ENCODE measurements at regions of chr14 and their contacts with region 1.

Region 1: DNA sequence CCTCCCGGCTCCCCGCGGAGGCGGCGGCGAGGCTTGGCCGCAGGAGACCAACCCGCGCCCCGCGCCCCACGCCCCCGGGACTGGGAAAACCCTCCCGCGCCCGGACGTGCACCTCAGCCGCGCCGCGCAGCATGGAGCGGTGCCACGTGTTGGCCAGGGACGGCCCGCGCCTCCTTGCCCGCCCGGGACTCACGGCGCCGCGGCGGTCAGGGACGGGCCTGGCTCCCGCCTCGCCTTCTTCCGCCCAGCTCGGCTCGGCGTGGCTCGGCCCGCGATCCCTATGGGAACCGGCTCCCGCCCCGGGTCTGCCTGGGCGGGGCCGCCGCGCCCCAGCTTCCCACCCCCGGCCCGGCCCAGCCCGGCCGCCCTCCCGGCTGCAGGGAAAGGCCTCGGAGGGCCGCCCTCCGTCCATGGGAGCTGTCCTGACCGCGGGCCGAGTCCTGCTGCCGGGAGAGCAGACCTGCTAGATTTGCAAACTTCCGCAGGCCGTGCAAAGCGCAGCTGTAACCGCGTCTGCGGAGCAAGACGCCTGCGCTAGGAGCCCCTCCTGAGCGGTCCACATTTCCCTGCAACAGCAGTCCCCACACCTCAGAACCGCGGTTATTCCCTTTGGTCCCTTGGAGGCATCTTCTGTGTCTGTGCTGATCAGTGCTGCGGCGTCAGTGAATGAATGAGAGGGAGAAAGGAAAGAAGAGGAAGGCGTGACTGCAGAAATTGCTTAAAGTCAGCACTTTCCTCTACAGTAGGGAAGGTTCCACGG is at the start of gene CDKL1:
- DNase-seq: peak; percentile 79
- ATAC-seq: peak; percentile 95
- total RNA-seq, gene CDKL1: 1.4 TPM

Region 2: DNA sequence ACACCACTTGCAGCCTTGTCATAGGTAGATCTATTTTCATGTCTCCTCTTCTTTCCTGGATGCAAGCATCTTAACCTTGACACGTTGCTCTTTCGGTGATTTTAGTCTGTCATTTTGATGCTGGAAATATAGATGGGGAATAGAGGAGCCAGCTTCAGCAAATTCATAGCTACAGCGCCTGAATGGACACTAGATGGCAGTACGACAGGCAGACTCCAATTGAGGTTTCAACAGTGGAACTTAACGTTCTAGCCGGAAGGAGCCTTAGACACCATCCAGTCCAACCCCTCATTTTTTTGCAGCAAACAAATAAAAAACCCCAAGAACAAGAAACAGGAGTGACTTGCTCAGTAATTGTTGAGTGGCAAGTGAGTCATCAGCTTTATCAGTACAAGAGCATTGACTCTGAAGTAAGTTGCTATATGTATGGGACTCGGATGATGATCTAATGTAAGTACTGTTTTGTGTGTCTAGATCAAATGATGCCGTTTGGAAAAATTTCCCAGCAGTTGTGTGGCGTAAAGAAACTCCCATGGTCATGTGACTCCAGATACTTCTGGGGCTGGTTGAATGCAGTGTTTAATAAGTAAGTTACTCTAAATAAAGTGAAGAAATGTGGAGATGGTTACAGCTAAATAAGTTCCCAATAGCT is 75.7 kb before region 1 on chr14:
- intact Hi-C with region 1: loop called (anchors 10 kb)
- DNase-seq: no peak
- ATAC-seq: peak; percentile 96

Region 3: GRCh38 chr14:50578433-50578832 is 181.6 kb after region 1 on chr14:
- intact Hi-C with region 1: no loop called
- DNase-seq: no peak
- ATAC-seq: no peak